Caco-2 (cell line): ENCODE measurements at regions of chr12 and their contacts with region 1.

Region 1: GRCh38 chr12:49623142-49623904 is at the start of gene PRPF40B:
- DNase-seq: peak; percentile 95 to 99
- H3K4me3 ChIP-seq: peak within 1 kb of the TSS; percentile 66
- H3K4me3 Mint-ChIP-seq: peak within 1 kb of the TSS; percentile 82
- H3K27ac Mint-ChIP-seq: peak within 1 kb of the TSS; percentile 77
- H3K4me1 ChIP-seq: peaks cover 32% of the 10 kb centered on the region
- H3K4me1 Mint-ChIP-seq: peaks cover 29% of the 10 kb centered on the region
- H3K27me3 ChIP-seq: no peaks in the 10 kb centered on the region
- H3K27me3 Mint-ChIP-seq: no peaks in the 10 kb centered on the region
- CTCF ChIP-seq: peak; percentile 61 to 71
- total RNA-seq, gene PRPF40B: 33.3 and 33.4 TPM in 2 replicates

Region 2: GRCh38 chr12:49553512-49554088 is 69.7 kb before region 1 on chr12:
- CTCF ChIA-PET with region 1: interaction called, 11 read pairs
- POLR2A ChIA-PET with region 1: interaction called, 6 read pairs
- intact Hi-C with region 1: loop called (anchors 1 kb)
- DNase-seq: peak in 1 of 2 experiments; percentile 65
- H3K4me3 ChIP-seq: no peak overlapping the region
- H3K4me3 Mint-ChIP-seq: no peak overlapping the region
- H3K27ac Mint-ChIP-seq: no peak overlapping the region
- H3K4me1 ChIP-seq: no peaks in the 10 kb centered on the region
- H3K4me1 Mint-ChIP-seq: no peaks in the 10 kb centered on the region
- H3K27me3 ChIP-seq: no peaks in the 10 kb centered on the region
- H3K27me3 Mint-ChIP-seq: no peaks in the 10 kb centered on the region
- CTCF ChIP-seq: peak; percentile 81 to 93

Region 3: GRCh38 chr12:49567611-49568441 is 55.5 kb before region 1 on chr12 and contains the start of gene MCRS1:
- CTCF ChIA-PET with region 1: no interaction called
- POLR2A ChIA-PET with region 1: interaction called, 4 read pairs
- intact Hi-C with region 1: loop called (anchors 1 kb)
- DNase-seq: peak; percentile 91 to 94
- H3K4me3 ChIP-seq: peak within 1 kb of the TSS; percentile 63
- H3K4me3 Mint-ChIP-seq: peak within 1 kb of the TSS; percentile 99
- H3K27ac Mint-ChIP-seq: peak within 1 kb of the TSS; percentile 99
- H3K4me1 ChIP-seq: no peaks in the 10 kb centered on the region
- H3K4me1 Mint-ChIP-seq: peaks cover 9% of the 10 kb centered on the region
- H3K27me3 ChIP-seq: no peaks in the 10 kb centered on the region
- H3K27me3 Mint-ChIP-seq: no peaks in the 10 kb centered on the region
- CTCF ChIP-seq: no peak
- total RNA-seq, gene MCRS1: 115 and 122 TPM in 2 replicates

Region 4: DNA sequence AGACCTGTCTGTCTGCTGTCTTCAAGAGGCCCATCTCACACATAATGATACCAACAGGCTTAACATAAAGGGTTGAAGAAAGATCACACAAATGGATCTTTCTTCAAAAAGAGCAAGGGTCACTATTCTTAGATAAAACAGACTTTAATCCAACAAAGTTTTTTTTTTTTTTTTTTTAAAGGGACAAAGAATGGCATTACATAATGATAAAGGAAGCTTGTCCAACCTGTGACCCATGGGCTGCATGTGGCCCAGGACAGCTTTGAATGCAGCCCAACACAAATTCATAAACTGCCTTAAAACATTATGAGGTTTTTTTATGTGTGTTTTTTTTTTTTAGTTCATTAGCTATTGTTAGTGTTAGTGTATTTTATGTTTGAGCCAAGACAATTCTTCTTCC is 11.1 kb before region 1 on chr12:
- CTCF ChIA-PET with region 1: interaction called, 16 read pairs
- POLR2A ChIA-PET with region 1: interaction called, 5 read pairs
- intact Hi-C with region 1: loop called (anchors 1 kb)
- DNase-seq: peak in 1 of 2 experiments; percentile 53
- H3K4me3 ChIP-seq: no peak overlapping the region
- H3K4me3 Mint-ChIP-seq: no peak overlapping the region
- H3K27ac Mint-ChIP-seq: peak overlapping the region; percentile 74
- H3K4me1 ChIP-seq: peaks cover 30% of the 10 kb centered on the region
- H3K4me1 Mint-ChIP-seq: peaks cover 20% of the 10 kb centered on the region
- H3K27me3 ChIP-seq: no peaks in the 10 kb centered on the region
- H3K27me3 Mint-ChIP-seq: no peaks in the 10 kb centered on the region
- CTCF ChIP-seq: no peak

Region 5: GRCh38 chr12:49703647-49704137 is 80.4 kb after region 1 on chr12:
- CTCF ChIA-PET with region 1: no interaction called
- POLR2A ChIA-PET with region 1: no interaction called
- intact Hi-C with region 1: no loop called
- DNase-seq: no peak
- H3K4me3 ChIP-seq: no peak overlapping the region
- H3K4me3 Mint-ChIP-seq: no peak overlapping the region
- H3K27ac Mint-ChIP-seq: no peak overlapping the region
- H3K4me1 ChIP-seq: peaks cover 5% of the 10 kb centered on the region; the same call in 1 of the 2 replicates
- H3K4me1 Mint-ChIP-seq: peaks cover 7% of the 10 kb centered on the region
- H3K27me3 ChIP-seq: no peaks in the 10 kb centered on the region
- H3K27me3 Mint-ChIP-seq: peaks cover 7% of the 10 kb centered on the region
- CTCF ChIP-seq: no peak

Region 6: DNA sequence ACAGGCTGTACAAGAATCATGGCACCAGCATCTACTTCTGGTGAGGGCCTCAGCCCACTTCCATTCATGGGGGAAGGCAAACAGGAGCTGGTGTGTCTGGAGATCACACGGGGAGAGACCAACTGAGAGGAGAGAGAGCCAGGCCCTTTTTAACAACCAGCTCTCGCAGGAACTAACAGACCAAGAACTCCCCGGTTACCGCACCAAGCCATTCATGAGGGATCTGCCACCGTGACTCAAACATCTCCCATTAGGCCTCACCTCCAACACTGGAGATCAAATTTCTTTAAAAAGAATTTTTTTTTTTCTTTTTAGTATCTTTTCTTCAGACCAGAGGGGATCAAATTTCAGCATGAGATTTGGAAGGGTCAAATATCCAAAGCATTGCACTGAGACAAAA is 310.5 kb after region 1 on chr12:
- CTCF ChIA-PET with region 1: no interaction called
- POLR2A ChIA-PET with region 1: interaction called, 11 read pairs
- intact Hi-C with region 1: no loop called
- DNase-seq: no peak
- H3K4me3 ChIP-seq: no peak overlapping the region
- H3K4me3 Mint-ChIP-seq: no peak overlapping the region
- H3K27ac Mint-ChIP-seq: no peak overlapping the region
- H3K4me1 ChIP-seq: no peaks in the 10 kb centered on the region
- H3K4me1 Mint-ChIP-seq: no peaks in the 10 kb centered on the region
- H3K27me3 ChIP-seq: no peaks in the 10 kb centered on the region
- H3K27me3 Mint-ChIP-seq: no peaks in the 10 kb centered on the region
- CTCF ChIP-seq: no peak